Dorsolateral prefrontal cortex (tissue), 120 donors: ENCODE measurements at regions of chr11 and their contacts with region 1.

Region 1: GRCh38 chr11:85810871-85811611 is at the start of gene SYTL2:
- DNase-seq: peak; percentile 49 to 87 (median 66)
- H3K4me3 ChIP-seq: peak within 1 kb of the TSS; percentile 55 to 89 (median 78)
- H3K27ac ChIP-seq: peak within 1 kb of the TSS in 55 of 59 donors; percentile 2 to 85 (median 63)
- H3K27me3 ChIP-seq: no peaks in the 10 kb centered on the region
- CTCF ChIP-seq: peak in 41 of 56 donors; percentile 1 to 66 (median 34)
- total RNA-seq, gene SYTL2: 74.0 to 191 (median 133) TPM

Region 2: DNA sequence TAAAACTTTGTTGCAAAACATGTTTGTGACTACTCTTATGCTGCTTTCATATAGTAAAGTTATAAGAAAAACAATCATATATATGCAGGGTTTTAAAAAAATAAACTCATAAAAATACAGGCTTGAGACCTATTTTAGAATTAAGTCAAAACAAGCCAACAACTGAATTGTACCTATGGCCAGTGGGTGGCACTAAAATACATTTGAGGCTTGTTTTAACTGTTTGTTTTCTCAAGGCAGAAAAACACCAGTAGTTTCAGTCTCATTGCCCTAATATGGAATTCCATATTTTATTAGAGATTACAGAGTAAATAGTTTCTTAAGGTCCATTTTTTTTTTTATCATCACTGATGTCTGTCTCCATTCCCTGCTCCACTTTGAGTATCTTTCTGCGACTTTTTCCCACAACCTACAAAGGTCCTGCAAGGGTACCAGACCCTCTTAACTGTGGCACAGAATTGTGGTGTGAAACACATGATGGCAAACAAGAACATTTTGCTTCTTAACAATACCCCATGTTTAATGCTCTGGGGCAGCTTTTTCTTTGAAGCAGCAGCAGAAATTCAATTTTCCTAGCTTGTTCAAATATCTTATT is 116.6 kb before region 1 on chr11:
- intact Hi-C with region 1: loop called in 1 of 2 experiments (anchors 5 kb)
- DNase-seq: no peak
- H3K4me3 ChIP-seq: no peak overlapping the region
- H3K27ac ChIP-seq: peak overlapping the region in 2 of 59 donors; percentile 7 to 11
- H3K27me3 ChIP-seq: no peaks in the 10 kb centered on the region
- CTCF ChIP-seq: peak in 55 of 56 donors; percentile 56 to 90 (median 69)

Region 3: GRCh38 chr11:85718991-85719807 is 91.8 kb before region 1 on chr11:
- intact Hi-C with region 1: loop called (anchors 2 to 5 kb)
- DNase-seq: peak in 9 of 10 donors; percentile 24 to 65 (median 49)
- H3K4me3 ChIP-seq: peak overlapping the region; percentile 33 to 72 (median 56)
- H3K27ac ChIP-seq: peak overlapping the region; percentile 32 to 95 (median 87)
- H3K27me3 ChIP-seq: no peaks in the 10 kb centered on the region
- CTCF ChIP-seq: peak in 1 of 56 donors; percentile 12

Region 4: GRCh38 chr11:85779956-85780640 is 30.9 kb before region 1 on chr11:
- intact Hi-C with region 1: loop called in 1 of 2 experiments (anchors 2 kb)
- DNase-seq: no peak
- H3K4me3 ChIP-seq: no peak overlapping the region
- H3K27ac ChIP-seq: peak overlapping the region in 11 of 59 donors; percentile 1 to 40 (median 22)
- H3K27me3 ChIP-seq: no peaks in the 10 kb centered on the region
- CTCF ChIP-seq: no peak

Region 5: GRCh38 chr11:85854557-85855340 is 43.7 kb after region 1 on chr11:
- intact Hi-C with region 1: no loop called
- DNase-seq: peak; percentile 75 to 91 (median 80)
- H3K4me3 ChIP-seq: peak overlapping the region; percentile 37 to 91 (median 68)
- H3K27ac ChIP-seq: peak overlapping the region in 55 of 59 donors; percentile 40 to 97 (median 84)
- H3K27me3 ChIP-seq: no peaks in the 10 kb centered on the region
- CTCF ChIP-seq: peak; percentile 86 to 99 (median 94)

Region 6: GRCh38 chr11:86162239-86162638 is 351.2 kb after region 1 on chr11:
- intact Hi-C with region 1: no loop called
- DNase-seq: peak in 4 of 10 donors; percentile 51 to 71 (median 60)
- H3K4me3 ChIP-seq: no peak overlapping the region
- H3K27ac ChIP-seq: peak overlapping the region in 55 of 59 donors; percentile 3 to 84 (median 65)
- H3K27me3 ChIP-seq: no peaks in the 10 kb centered on the region
- CTCF ChIP-seq: no peak